CD4-positive, alpha-beta memory T cell (primary cell): ENCODE measurements at regions of chr10 and their contacts with region 1.

Region 1: DNA sequence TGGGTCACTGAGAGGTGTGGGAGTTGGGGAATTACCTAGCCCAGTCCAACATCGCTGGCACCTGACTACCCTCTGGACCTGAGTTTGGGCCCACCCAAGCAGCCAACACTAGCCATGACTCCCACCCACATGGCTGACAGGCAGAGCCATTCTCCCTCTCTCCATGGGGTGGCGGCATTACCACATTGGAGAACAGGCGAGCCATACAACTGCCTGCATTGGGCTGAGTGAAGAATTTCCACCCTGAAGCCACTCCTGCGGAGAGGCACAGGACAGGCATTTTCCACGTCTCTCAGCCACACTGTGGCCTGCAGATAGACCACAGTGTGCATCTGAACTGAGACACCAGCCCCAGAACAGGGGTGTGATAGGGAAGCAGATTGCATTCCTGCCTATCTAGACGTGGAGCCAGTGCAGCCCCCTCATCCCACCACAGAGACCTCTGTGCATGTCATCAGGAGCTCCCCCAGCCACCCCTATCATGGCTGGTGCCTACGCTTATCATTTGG is 58.2 kb upstream of the ANTXRL start:
- DNase-seq: peak; percentile 33 to 48 (median 46)
- H3K4me3 ChIP-seq: no peak overlapping the region
- H3K4me3 Mint-ChIP-seq: no peak overlapping the region
- H3K27ac ChIP-seq: no peak overlapping the region
- H3K27ac Mint-ChIP-seq: peak overlapping the region in 2 of 7 donors; percentile 13 to 77
- H3K4me1 ChIP-seq: no peaks in the 10 kb centered on the region
- H3K4me1 Mint-ChIP-seq: peaks cover 0 to 10% (median 6%) of the 10 kb centered on the region in 4 donors
- H3K27me3 ChIP-seq: no peaks in the 10 kb centered on the region
- H3K27me3 Mint-ChIP-seq: no peaks in the 10 kb centered on the region

Region 2: DNA sequence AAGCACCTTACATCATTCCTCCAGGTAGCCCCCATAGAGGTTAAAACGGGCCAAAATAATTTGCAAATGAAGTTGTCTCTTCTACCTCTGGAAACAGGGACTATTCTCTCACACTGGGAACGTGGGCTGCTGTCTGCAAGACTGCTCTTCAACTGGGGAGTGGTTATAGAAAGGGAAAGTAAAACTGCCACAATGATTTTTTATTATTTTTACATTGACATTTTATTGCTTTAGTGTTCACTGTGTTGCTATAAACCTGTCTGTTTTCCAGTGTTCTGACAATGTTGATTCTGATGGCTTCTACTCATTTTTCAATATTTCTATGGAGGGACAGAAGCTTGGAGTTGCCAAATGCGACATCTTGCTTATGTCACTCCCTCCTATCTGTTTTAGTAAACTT is 57.0 kb before region 1 on chr10:
- CTCF ChIA-PET with region 1: no interaction called
- POLR2A ChIA-PET with region 1: no interaction called
- intact Hi-C with region 1: no loop called
- DNase-seq: no peak
- H3K4me3 ChIP-seq: no peak overlapping the region
- H3K4me3 Mint-ChIP-seq: no peak overlapping the region
- H3K27ac ChIP-seq: no peak overlapping the region
- H3K27ac Mint-ChIP-seq: no peak overlapping the region
- H3K4me1 ChIP-seq: no peaks in the 10 kb centered on the region
- H3K4me1 Mint-ChIP-seq: no peaks in the 10 kb centered on the region
- H3K27me3 ChIP-seq: no peaks in the 10 kb centered on the region
- H3K27me3 Mint-ChIP-seq: no peaks in the 10 kb centered on the region

Region 3: GRCh38 chr10:46277840-46278239 is 49.2 kb after region 1 on chr10:
- CTCF ChIA-PET with region 1: no interaction called
- POLR2A ChIA-PET with region 1: no interaction called
- intact Hi-C with region 1: no loop called
- DNase-seq: no peak
- H3K4me3 ChIP-seq: no peak overlapping the region
- H3K4me3 Mint-ChIP-seq: no peak overlapping the region
- H3K27ac ChIP-seq: no peak overlapping the region
- H3K27ac Mint-ChIP-seq: no peak overlapping the region
- H3K4me1 ChIP-seq: peaks cover 13% of the 10 kb centered on the region
- H3K4me1 Mint-ChIP-seq: peaks cover 10 to 23% (median 18%) of the 10 kb centered on the region in 4 donors
- H3K27me3 ChIP-seq: no peaks in the 10 kb centered on the region
- H3K27me3 Mint-ChIP-seq: no peaks in the 10 kb centered on the region

Region 4: DNA sequence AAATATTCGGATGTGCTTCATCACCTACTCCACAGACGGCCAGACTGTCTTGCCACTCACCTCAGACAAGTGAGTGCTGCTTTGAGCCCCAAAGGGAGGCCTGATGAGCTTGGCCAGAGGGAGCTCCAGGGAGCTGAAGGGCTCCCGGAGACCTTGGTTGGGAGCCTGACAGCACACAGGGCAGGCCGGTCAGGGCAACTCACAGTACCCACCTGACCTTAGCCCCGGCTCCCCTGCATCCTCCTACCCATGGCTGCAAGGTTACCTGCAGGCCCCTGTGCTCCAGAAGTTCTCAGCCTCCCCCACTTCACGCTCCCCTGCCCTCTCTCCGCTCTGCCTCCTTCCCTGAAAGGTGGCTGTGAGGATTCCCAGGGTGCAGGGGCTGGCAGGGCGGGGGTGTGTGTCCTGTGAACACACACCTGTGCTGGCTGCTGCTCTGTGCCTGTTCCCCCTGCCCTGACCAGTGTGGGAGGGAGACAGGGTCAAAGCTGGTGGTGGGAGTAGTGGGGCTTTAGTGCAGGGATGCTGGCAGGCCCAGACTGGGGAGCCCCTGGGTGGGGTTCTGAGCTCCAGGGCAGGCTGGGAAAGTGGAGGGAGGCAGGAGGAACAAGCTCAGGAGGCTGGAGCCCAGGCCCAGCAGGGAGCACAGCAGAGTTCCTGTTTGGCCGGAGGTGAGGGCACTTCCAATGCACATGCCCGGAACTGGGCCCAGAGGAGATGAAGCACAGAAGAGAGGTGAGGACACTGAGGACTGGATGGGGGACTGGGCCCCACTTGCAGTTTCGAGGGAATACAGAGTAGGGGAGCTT is 65.4 kb after region 1 on chr10:
- CTCF ChIA-PET with region 1: no interaction called
- POLR2A ChIA-PET with region 1: no interaction called
- intact Hi-C with region 1: no loop called
- DNase-seq: no peak
- H3K4me3 ChIP-seq: no peak overlapping the region
- H3K4me3 Mint-ChIP-seq: no peak overlapping the region
- H3K27ac ChIP-seq: no peak overlapping the region
- H3K27ac Mint-ChIP-seq: no peak overlapping the region
- H3K4me1 ChIP-seq: peaks cover 10% of the 10 kb centered on the region
- H3K4me1 Mint-ChIP-seq: peaks cover 12 to 17% (median 13%) of the 10 kb centered on the region in 4 donors
- H3K27me3 ChIP-seq: no peaks in the 10 kb centered on the region
- H3K27me3 Mint-ChIP-seq: no peaks in the 10 kb centered on the region

Region 5: DNA sequence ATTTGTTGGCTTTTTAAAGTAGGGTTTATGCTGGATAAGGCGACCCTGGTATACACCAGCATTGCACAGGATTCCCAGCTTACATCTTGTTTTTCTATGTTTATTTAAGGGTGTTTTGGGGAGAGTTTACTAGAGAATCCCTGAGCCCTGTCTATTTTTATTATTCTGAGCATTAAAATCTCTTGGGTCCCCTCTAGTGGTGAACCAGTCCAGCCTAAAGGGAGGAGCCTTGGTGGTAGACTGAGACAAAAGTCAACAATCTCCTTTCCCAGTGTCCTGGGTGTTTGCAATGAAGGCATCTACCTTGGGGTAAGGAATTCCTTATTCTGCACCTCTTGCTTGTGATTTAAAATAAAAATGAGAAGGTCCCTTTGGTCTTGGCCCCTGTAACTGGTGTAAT is 96.4 kb after region 1 on chr10:
- CTCF ChIA-PET with region 1: interaction called, 9 read pairs
- POLR2A ChIA-PET with region 1: no interaction called
- intact Hi-C with region 1: loop called (anchors 1 kb)
- DNase-seq: peak in 2 of 5 donors; percentile 10 to 17
- H3K4me3 ChIP-seq: no peak overlapping the region
- H3K4me3 Mint-ChIP-seq: no peak overlapping the region
- H3K27ac ChIP-seq: no peak overlapping the region
- H3K27ac Mint-ChIP-seq: no peak overlapping the region
- H3K4me1 ChIP-seq: no peaks in the 10 kb centered on the region
- H3K4me1 Mint-ChIP-seq: no peaks in the 10 kb centered on the region
- H3K27me3 ChIP-seq: no peaks in the 10 kb centered on the region
- H3K27me3 Mint-ChIP-seq: no peaks in the 10 kb centered on the region

Region 6: DNA sequence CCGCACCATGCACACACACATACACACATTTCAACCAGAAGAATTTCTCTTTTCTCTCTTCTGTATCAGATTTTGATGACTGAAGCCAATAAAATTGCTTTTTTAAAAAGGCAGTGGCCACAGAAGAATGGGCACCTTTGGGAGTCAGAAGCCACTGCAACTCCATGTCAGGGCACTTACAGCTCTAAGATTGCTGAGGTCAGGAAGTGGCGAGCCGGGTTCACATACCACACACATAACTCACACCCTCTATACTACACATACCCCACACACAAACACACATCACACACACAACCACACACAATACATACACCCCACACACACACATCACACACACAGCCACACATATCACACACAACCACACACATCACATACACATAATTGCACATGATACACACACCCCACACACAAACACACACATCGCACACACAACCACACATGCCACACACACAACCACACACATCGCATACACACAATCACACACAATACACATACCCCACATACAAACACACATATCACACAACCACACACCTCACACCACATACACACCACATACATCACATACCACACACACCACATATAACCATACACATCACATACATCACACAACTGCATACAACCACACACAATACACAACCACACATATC is 296.7 kb after region 1 on chr10:
- CTCF ChIA-PET with region 1: no interaction called
- POLR2A ChIA-PET with region 1: no interaction called
- intact Hi-C with region 1: no loop called
- DNase-seq: peak in 1 of 5 donors; percentile 25
- H3K4me3 ChIP-seq: no peak overlapping the region
- H3K4me3 Mint-ChIP-seq: no peak overlapping the region
- H3K27ac ChIP-seq: no peak overlapping the region
- H3K27ac Mint-ChIP-seq: no peak overlapping the region
- H3K4me1 ChIP-seq: no peaks in the 10 kb centered on the region
- H3K4me1 Mint-ChIP-seq: no peaks in the 10 kb centered on the region
- H3K27me3 ChIP-seq: no peaks in the 10 kb centered on the region
- H3K27me3 Mint-ChIP-seq: no peaks in the 10 kb centered on the region